CD14-positive monocyte (primary cell): ENCODE measurements at regions of chr2 and their contacts with region 1.

Region 1: DNA sequence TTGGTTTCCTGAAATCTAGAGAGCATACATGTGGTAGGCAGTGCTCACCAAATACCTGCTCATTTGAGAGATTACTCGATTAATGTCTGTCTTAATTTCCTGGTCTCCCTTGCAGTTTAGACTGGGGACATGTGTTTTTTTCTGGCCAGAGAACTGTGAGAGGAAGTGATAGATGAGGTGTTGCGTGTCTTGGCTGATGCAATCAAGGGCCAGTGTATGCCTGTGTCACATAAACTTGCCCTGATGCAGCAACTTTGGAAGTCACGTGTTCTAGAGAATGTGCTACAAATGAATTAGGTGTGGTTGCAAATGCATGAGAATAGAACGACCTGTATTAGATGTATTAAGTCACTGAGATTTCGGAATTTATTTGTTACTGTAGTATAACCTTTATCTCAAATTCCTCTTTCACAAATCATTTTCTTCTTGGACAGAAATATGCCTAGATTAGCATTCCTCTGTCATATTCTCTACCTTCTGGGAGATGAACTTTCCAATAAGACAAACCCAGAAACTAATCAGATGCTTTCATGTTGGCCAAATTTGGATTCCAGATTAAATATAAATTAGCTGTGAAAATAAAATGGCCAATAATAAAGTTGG is 9.9 kb upstream of the IL1A start:
- DNase-seq: peak; percentile 97 to 100 (median 99)
- H3K4me3 ChIP-seq: peak overlapping the region in 1 of 3 experiments; percentile 29
- H3K4me3 Mint-ChIP-seq: peak overlapping the region in 1 of 2 donors; percentile 53
- H3K27ac ChIP-seq: peak overlapping the region; percentile 70 to 99
- H3K27ac Mint-ChIP-seq: peak overlapping the region; percentile 95 to 99 (median 97)
- H3K4me1 ChIP-seq: peaks cover 47 to 59% of the 10 kb centered on the region in 2 donors
- H3K4me1 Mint-ChIP-seq: peaks cover 44% of the 10 kb centered on the region
- H3K27me3 ChIP-seq: no peaks in the 10 kb centered on the region
- H3K27me3 Mint-ChIP-seq: peaks cover 2 to 4% (median 4%) of the 10 kb centered on the region in 3 donors
- CTCF ChIP-seq: no peak

Region 2: DNA sequence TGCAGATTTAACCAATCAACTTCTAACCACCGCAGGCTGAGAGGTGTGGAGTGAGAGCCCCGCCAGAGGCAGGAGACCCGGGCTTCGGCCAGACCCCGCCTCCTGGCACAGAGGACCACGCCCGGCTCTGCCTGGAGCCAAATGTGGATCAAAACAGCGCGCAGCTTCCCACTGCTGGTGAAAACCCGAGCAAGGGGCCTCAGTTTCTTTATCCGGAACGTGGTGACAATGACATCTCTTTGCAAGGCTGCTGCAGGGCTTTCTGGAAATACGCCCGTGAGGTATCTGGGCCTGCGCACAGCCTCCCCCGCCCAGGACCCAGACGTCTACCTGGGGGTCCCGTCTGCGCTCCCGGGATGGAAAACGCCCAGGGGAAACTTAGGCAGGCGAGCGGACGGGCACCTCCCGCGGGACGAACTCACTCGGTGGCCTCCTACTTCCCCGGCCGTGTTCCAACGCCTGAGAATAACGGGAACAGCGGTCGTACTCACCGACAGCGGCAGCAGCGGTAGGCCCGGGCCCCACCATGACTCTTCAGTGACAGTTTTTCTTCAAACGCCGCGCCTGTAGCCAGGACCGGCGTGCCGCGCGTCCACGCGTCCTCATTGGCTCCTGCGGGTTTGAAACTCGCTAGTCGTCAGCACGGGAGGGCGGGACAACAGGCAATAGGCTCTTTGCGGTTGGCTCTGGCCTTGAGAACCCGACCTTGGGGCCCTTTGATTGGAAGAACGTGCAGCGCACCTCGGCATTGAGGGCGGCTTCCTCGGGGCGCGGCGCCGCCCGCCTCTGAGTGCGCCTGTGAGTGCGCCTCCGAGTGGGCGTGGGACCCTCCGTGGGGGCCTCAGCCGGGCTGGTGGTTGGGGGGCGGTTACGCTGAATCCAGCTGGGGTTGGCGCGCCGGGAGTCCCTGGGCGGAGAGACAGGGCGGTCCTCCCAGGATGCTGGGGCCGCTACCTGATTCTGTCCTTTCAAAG is 29.9 kb before region 1 on chr2 and contains the start of gene CKAP2L:
- intact Hi-C with region 1: loop called in 1 of 2 experiments (anchors 5 kb)
- DNase-seq: peak; percentile 94 to 97 (median 95)
- H3K4me3 ChIP-seq: peak within 1 kb of the TSS; percentile 58 to 90 (median 64)
- H3K4me3 Mint-ChIP-seq: peak within 1 kb of the TSS; percentile 89 to 93
- H3K27ac ChIP-seq: peak within 1 kb of the TSS in 1 of 2 donors; percentile 81
- H3K27ac Mint-ChIP-seq: peak within 1 kb of the TSS; percentile 74 to 95 (median 89)
- H3K4me1 ChIP-seq: peaks cover 36 to 50% of the 10 kb centered on the region in 2 donors
- H3K4me1 Mint-ChIP-seq: peaks cover 50% of the 10 kb centered on the region
- H3K27me3 ChIP-seq: no peaks in the 10 kb centered on the region
- H3K27me3 Mint-ChIP-seq: peaks cover 0 to 3% (median 0%) of the 10 kb centered on the region in 3 donors
- CTCF ChIP-seq: no peak
- polyA plus RNA-seq, gene CKAP2L: 0.04 to 0.24 TPM in 2 of 3 donors, not detected in the other

Region 3: DNA sequence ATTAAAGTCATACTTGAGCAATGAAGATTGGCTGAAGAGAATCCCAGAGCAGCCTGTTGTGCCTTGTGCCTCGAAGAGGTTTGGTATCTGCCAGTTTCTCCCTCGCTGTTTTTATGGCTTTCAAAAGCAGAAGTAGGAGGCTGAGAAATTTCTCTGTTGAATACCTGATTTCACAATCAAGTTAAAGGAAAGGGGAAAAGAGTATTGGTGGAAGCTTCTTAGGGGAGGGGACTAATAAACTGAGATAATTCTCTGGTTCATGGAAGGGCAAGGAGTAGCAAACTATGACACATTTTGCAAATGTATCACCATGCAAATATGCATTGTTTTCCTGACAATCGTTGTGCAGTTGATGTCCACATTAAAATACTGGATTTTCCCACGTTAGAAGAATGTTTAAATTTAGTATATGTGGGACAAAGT is 42.5 kb after region 1 on chr2 and contains the start of gene IL1B:
- intact Hi-C with region 1: loop called (anchors 2 to 5 kb)
- DNase-seq: peak; percentile 92 to 96 (median 93)
- H3K4me3 ChIP-seq: peak within 1 kb of the TSS; percentile 40 to 100 (median 91)
- H3K4me3 Mint-ChIP-seq: peak within 1 kb of the TSS; percentile 94 to 98
- H3K27ac ChIP-seq: peak within 1 kb of the TSS; percentile 83 to 94
- H3K27ac Mint-ChIP-seq: peak within 1 kb of the TSS; percentile 96 to 100 (median 99)
- H3K4me1 ChIP-seq: peaks cover 96% of the 10 kb centered on the region in 2 donors
- H3K4me1 Mint-ChIP-seq: peaks cover 96% of the 10 kb centered on the region
- H3K27me3 ChIP-seq: no peaks in the 10 kb centered on the region
- H3K27me3 Mint-ChIP-seq: peaks cover 0 to 9% (median 6%) of the 10 kb centered on the region in 3 donors
- CTCF ChIP-seq: no peak
- polyA plus RNA-seq, gene IL1B: 65.1 to 1,419 (median 114) TPM

Region 4: DNA sequence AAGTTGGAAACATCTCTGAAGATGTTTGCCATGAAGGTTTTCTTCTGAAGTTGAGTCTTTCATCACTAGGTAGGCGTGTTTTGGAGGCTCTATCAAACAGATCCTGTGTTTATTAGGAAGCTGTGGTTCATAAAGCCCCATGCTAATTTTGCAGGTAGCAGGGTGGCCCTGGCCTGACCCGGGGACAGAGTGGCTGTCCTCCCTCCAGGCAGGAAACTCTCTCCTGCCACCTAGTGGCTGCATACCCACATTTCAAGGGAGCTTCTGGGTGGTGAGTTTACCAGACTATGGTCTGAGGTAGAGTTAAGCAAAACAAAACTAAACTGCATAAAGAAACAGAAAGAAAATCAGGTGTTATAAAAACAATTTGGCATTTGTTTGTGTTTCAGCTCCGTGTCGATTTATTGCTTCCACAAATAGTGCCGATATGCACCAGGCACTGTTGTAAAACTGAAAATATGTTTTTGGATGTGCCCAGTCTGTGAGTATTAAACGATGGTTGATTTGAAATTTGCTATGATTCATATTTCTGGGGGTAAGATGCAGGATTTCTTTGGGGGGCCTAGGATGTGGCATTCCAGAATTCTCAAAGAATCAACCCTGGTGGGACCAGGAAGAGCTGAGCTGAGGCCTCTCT is 90.8 kb after region 1 on chr2:
- intact Hi-C with region 1: loop called in 1 of 2 experiments (anchors 10 kb)
- DNase-seq: peak; percentile 70 to 83 (median 81)
- H3K4me3 ChIP-seq: no peak overlapping the region
- H3K4me3 Mint-ChIP-seq: no peak overlapping the region
- H3K27ac ChIP-seq: no peak overlapping the region
- H3K27ac Mint-ChIP-seq: peak overlapping the region in 5 of 7 donors; percentile 35 to 85 (median 61)
- H3K4me1 ChIP-seq: peaks cover 43 to 54% of the 10 kb centered on the region in 2 donors
- H3K4me1 Mint-ChIP-seq: peaks cover 49% of the 10 kb centered on the region
- H3K27me3 ChIP-seq: no peaks in the 10 kb centered on the region
- H3K27me3 Mint-ChIP-seq: peaks cover 0 to 3% (median 0%) of the 10 kb centered on the region in 3 donors
- CTCF ChIP-seq: peak; percentile 97